Activated B cell treated with CpG ODN at 0.5 μM for 24 hours (primary cell): ENCODE measurements at regions of chr10 and their contacts with region 1.

Region 1: GRCh38 chr10:110045772-110046171 is 38.0 kb downstream of the ADD3 start:
- DNase-seq: no peak
- ATAC-seq: no peak
- H3K4me3 Mint-ChIP-seq: no peak overlapping the region
- H3K27ac Mint-ChIP-seq: no peak overlapping the region
- H3K4me1 Mint-ChIP-seq: peaks cover 30% of the 10 kb centered on the region
- H3K27me3 Mint-ChIP-seq: no peaks in the 10 kb centered on the region
- CTCF ChIP-seq: no peak

Region 2: GRCh38 chr10:109640935-109641334 is 404.8 kb before region 1 on chr10:
- CTCF ChIA-PET with region 1: no interaction called
- POLR2A ChIA-PET with region 1: no interaction called
- intact Hi-C with region 1: no loop called
- DNase-seq: no peak
- ATAC-seq: no peak
- H3K4me3 Mint-ChIP-seq: no peak overlapping the region
- H3K27ac Mint-ChIP-seq: no peak overlapping the region
- H3K4me1 Mint-ChIP-seq: no peaks in the 10 kb centered on the region
- H3K27me3 Mint-ChIP-seq: no peaks in the 10 kb centered on the region
- CTCF ChIP-seq: no peak

Region 3: DNA sequence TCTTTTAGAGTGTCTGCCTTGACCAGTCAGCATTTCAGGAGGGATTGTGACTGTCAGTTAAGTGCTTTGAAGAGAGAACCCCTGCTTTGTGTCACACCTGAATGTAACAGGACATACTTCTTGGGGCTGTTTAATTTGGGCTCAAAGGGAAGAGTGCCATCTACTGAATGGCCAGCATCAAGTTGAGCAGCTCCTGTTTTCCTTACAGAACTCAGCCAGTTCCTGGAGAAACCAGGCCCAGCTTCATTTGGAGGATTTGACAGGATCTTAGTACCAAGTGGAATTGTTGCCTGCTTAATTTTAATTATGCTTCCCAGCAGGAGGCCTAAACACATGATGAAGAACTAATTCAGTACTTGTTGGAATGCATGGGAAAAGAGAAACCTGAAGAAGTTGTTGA is 29.7 kb before region 1 on chr10:
- CTCF ChIA-PET with region 1: no interaction called
- POLR2A ChIA-PET with region 1: no interaction called
- intact Hi-C with region 1: no loop called
- DNase-seq: no peak
- ATAC-seq: peak; percentile 37
- H3K4me3 Mint-ChIP-seq: no peak overlapping the region
- H3K27ac Mint-ChIP-seq: no peak overlapping the region
- H3K4me1 Mint-ChIP-seq: peaks cover 76% of the 10 kb centered on the region
- H3K27me3 Mint-ChIP-seq: no peaks in the 10 kb centered on the region
- CTCF ChIP-seq: no peak

Region 4: DNA sequence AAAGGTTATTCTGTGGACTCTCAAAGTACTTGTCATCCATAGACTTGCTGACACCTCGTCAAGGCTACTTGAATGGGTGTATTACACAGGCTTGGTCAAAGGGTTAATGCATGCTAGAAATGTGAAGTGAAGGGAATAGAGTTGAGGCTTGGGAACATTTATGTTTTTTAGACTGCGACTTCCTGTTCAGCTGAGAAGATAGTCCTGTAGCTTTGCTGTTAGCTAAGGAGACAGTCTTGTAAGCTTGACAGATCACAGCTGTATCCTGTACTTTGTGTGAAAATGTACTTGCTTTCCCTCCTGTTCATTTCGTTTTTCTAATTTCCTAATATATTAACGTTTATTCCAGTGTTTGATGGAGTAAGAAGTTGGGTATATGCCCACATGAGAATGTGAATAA is 14.2 kb after region 1 on chr10:
- CTCF ChIA-PET with region 1: no interaction called
- POLR2A ChIA-PET with region 1: interaction called, 7 read pairs
- intact Hi-C with region 1: loop called (anchors 2 kb)
- DNase-seq: no peak
- ATAC-seq: peak; percentile 58
- H3K4me3 Mint-ChIP-seq: no peak overlapping the region
- H3K27ac Mint-ChIP-seq: peak overlapping the region; percentile 90
- H3K4me1 Mint-ChIP-seq: peaks cover 76% of the 10 kb centered on the region
- H3K27me3 Mint-ChIP-seq: no peaks in the 10 kb centered on the region
- CTCF ChIP-seq: no peak